ENCODE measurements at regions of chr1 and their contacts with region 1.

Region 1: GRCh38 chr1:152189657-152190442 is 30.8 kb upstream of the RPTN start:
- DNase-seq: peak; percentile 69
- H3K4me3 Mint-ChIP-seq: peak overlapping the region; percentile 43
- H3K27ac Mint-ChIP-seq: peak overlapping the region; percentile 26
- H3K4me1 Mint-ChIP-seq: peaks cover 6% of the 10 kb centered on the region
- H3K27me3 Mint-ChIP-seq: peaks cover 37% of the 10 kb centered on the region

Region 2: DNA sequence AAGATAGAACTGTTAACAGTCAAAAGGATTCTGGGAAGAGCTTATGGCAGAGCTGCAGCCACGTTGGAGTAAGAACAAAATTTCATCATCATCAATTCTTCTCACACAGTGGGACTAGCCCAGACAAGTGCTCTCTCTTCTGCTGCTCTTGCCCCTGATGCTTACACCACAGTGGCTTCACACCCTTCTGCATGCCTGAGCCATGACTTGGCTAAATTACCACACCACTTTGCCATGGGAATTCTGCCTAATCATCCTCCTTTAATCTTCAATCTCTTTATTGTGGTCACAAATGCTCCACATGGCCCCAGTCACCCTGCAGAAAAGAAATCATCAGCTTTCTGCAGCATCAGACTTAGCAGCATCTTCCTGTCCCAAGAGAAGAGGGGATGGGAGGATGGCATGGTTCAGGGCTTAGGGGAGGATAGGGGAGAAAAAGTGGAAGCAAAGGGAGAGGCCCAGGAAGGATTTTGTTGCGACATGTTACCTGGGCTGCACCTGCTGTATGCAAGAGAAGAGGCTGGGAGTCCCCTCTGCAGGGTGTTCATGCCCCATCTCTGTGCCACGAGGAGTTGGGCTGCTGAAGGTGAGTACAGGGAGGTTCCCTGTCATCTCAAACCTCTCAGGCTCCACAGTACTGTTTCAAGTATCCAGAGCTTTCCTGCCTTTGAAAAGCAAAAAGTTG is 21.9 kb before region 1 on chr1:
- CTCF ChIA-PET with region 1: interaction called, 11 read pairs
- POLR2A ChIA-PET with region 1: no interaction called
- DNase-seq: no peak
- H3K4me3 Mint-ChIP-seq: no peak overlapping the region
- H3K27ac Mint-ChIP-seq: peak overlapping the region; percentile 10
- H3K4me1 Mint-ChIP-seq: peaks cover 13% of the 10 kb centered on the region
- H3K27me3 Mint-ChIP-seq: peaks cover 14% of the 10 kb centered on the region

Measured in activated CD4-positive, alpha-beta T cell treated with anti-CD3 and anti-CD28 coated beads, Interleukin-2, amount 10 ng/mL, durations not matched to agents 7 days and 5 days (primary cell).